Right cardiac atrium (tissue), 5 donors: ENCODE measurements at regions of chr12 and their contacts with region 1.

Region 1: DNA sequence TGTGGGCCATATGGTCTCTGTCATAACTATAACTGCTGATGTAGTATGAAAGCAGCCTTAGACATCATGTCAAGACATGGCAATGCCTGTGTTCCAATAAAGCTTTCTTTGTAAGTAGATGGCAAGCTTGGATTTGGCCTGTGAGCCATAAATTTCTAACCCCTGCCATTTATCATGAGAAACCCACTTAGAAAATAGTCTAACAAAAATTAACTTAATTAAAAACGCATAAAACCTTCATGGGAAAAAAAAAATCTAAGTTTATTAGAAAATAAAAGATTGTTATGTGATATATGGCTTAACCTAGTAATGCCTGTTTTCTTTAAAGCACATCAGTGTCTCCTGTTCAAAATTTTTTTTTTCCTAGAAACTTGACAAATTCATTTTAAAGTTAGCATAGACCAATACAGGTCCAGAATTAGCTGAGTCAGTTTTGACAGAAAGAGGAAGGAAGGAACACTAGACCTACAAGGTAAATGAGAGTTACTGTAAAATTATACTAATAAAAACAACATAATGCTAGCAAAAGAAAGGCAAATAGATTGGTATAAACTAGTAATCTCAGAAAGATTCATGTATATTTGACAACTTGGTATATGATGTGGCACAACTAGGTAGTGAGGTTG is 68.2 kb downstream of the USP15 start:
- DNase-seq: no peak
- ATAC-seq: no peak
- H3K4me3 ChIP-seq: no peak overlapping the region
- H3K27ac ChIP-seq: no peak overlapping the region
- H3K4me1 ChIP-seq: no peaks in the 10 kb centered on the region
- H3K27me3 ChIP-seq: no peaks in the 10 kb centered on the region

Region 2: GRCh38 chr12:61879229-61879628 is 449.2 kb before region 1 on chr12:
- intact Hi-C with region 1: no loop called
- DNase-seq: peak in 1 of 3 donors; percentile 52
- ATAC-seq: no peak
- H3K4me3 ChIP-seq: no peak overlapping the region
- H3K27ac ChIP-seq: no peak overlapping the region
- H3K4me1 ChIP-seq: no peaks in the 10 kb centered on the region
- H3K27me3 ChIP-seq: no peaks in the 10 kb centered on the region

Region 3: DNA sequence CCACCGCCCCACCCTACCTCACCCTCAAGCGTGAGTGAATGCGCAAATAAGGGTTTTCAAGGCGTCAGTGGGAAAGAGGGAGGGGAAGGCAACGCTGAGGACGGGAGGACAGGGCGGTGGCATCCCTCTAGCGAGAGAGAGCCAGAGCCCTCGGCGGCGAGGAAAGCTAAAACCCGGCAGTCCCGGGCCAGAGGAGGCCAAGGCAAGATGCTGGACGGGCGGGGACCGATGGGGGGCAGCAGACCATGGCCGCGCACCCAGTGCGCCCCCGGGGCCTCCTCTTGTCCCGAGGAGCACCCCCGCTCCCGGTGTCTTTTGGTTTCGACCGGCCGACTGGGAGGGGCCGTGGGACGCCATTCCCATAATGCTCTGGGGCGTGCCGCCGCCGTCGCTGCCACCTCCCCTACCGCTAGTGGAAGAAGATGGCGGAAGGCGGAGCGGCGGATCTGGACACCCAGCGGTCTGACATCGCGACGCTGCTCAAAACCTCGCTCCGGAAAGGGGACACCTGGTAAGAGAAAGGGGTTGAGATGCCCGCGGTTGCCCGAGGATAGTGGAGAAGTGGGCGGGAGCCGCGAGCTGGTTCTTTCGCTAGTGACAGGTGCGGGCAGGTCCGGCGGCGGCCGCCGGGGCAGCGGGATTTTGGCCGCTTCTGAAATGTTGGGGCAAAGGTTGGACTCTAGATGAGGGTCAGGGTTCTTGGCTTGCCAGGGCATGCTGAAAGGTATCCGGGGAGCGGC is 68.2 kb before region 1 on chr12 and contains the start of gene USP15:
- intact Hi-C with region 1: loop called in 1 of 4 experiments (anchors 10 kb)
- DNase-seq: peak; percentile 96 to 99 (median 98)
- ATAC-seq: peak; percentile 98
- H3K4me3 ChIP-seq: peak within 1 kb of the TSS; percentile 93
- H3K27ac ChIP-seq: peak within 1 kb of the TSS; percentile 91
- H3K4me1 ChIP-seq: no peaks in the 10 kb centered on the region
- H3K27me3 ChIP-seq: no peaks in the 10 kb centered on the region
- total RNA-seq, gene USP15: 44.1 to 65.7 (median 51.2) TPM